BJ (cell line): ENCODE measurements at regions of chrX and their contacts with region 1.

Region 1: DNA sequence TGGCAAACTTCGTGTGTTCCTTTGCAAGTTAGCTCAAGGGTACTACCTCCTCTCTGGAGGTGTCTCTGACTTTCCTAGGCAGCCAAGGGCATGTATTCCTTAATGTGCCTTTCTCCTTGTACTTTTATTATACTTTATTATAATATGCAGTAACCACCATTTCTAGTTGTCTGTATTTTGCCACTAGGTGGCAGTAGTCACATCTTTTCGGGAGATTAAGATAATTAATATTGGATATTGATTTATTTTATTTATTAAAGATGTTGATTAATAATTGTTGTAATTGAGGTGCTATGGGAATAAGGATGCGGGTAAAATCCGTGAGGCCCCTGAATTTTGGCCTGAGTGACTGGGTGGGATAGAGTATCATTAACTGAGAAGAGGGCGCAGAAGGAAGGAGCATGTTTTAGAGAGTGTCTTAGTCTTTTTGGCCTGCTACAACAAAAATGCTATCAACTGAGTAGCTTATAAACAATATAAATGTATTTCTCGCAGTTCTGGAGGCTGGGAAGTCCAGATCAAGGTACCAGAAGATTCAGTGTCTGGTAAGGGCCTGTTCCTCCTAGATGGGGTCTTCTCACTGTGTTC is 153.3 kb downstream of the TMEM164 start:
- DNase-seq: no peak
- H3K4me3 ChIP-seq: no peak overlapping the region
- H3K27me3 ChIP-seq: no peaks in the 10 kb centered on the region
- CTCF ChIP-seq: peak; percentile 18; the same call in 1 of the 2 replicates

Region 2: DNA sequence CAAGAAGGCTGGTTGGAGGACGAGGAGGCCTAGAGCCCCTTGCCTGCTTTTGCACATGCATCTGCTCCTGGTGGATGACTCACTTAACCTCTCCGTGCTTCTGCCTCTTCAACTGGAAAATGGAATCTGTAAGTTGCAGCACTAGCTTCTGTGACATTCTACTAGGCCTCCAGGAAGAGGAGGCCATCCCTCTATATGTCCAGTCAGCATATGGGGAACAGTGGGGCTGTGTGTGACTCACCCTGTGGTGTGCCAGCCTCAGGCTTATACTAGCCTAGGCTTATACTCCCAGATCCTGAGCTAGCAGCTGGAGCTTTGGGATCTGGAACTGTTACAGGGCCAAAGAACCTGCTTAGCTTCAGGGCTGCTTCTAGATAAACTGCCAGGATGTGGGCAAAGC is 238.4 kb after region 1 on chrX:
- CTCF ChIA-PET with region 1: no interaction called
- POLR2A ChIA-PET with region 1: no interaction called
- DNase-seq: no peak
- H3K4me3 ChIP-seq: no peak overlapping the region
- H3K27me3 ChIP-seq: no peaks in the 10 kb centered on the region
- CTCF ChIP-seq: no peak

Region 3: DNA sequence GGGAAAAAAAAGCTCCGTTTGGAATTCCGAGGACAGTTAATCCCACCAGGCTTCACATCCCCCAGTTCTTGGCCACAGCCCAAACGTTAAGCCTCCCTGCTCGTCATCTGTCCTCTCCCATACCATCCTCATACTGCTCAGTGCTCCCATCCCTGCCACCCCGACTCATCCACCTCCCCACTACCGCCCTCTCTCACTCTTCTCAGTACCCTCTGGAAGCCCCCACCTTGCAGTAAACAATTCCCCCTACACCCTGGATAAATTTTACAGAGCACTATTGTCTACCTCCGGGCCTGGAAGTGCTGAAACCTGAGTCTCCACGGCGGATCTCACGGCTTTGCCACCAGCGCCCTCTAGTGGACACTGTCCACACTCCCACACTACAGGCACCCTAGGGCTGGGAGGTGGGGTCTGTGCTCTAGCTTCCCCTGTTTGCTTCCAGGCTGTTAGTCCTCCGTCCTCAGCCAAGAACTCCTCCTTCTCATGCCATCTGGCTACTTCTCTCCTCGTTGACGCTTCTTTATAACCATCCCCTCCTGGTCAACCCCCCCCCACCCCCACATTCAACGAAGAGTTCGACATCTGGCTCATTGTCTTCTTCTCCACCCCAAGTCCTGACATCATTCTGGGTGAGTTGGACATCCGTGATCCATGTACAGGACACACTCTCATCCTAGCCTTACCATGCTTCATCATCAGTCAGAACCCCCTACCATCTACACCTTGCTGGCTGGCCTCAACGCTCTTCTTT is 256.9 kb after region 1 on chrX:
- CTCF ChIA-PET with region 1: interaction called, 331 read pairs
- POLR2A ChIA-PET with region 1: no interaction called
- DNase-seq: no peak
- H3K4me3 ChIP-seq: no peak overlapping the region
- H3K27me3 ChIP-seq: no peaks in the 10 kb centered on the region
- CTCF ChIP-seq: peak; percentile 75